ENCODE measurements at regions of chr1 and their contacts with region 1.

Region 1: DNA sequence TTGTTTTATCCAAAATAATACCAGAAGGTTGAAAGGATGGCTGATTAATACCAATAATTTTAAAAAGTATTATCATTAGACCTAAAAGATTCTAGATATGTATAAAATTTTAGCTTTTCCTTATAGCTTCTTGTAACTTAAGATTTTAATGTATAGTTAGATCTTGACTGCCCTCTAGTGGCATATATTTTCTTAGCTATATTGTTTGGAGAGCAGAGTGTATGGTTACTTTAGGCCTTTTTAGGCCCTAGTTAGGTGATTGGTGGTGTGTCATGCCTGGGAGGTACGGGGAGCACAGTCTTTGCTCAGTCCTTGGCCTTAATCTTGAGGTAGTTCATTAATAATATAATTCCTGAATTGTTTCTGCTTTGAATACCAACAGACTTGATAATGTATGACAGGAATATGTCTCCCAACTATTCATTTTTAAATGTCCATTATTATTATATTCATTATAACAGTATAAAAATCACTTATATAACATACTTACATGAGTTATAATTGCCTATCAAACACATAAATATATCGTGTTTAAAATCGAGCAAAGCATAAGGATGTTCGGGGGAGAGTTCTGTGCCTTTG is 328.4 kb downstream of the ZP4 start:
- DNase-seq: peak; percentile 31 to 75
- ATAC-seq: peak; percentile 91 to 94
- H3K4me3 ChIP-seq: no peak overlapping the region
- H3K27ac ChIP-seq: no peak overlapping the region
- H3K4me1 ChIP-seq: no peaks in the 10 kb centered on the region
- CTCF ChIP-seq: peak; percentile 70
- EP300 ChIP-seq: no peak
- POLR2A ChIP-seq: no peak
- RAD21 ChIP-seq: peak; percentile 68 to 69

Region 2: DNA sequence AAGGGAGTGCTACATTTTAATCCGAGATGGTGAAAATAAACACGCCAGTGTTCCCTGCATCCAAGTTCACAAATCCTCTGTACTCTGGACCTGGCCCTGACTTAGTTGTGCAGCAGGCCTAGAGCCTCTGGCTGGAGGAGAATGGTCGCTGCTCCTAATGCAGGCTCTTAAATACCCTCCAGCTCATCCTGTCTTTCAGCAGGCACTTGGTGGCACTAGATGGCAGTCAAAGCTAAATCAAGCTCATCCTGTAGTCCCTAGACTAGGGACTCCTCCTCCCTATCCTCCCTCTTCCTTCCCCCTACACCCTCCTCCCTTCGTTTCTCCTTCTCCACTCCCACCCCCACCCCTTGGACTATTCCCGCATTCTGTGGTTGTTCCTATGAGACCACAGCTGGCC is 808.8 kb before region 1 on chr1:
- CTCF ChIA-PET with region 1: interaction called, 14 read pairs
- POLR2A ChIA-PET with region 1: no interaction called
- DNase-seq: peak; percentile 21 to 73
- ATAC-seq: peak; percentile 94 to 97
- H3K4me3 ChIP-seq: no peak overlapping the region
- H3K27ac ChIP-seq: no peak overlapping the region
- H3K4me1 ChIP-seq: no peaks in the 10 kb centered on the region
- CTCF ChIP-seq: peak; percentile 56
- EP300 ChIP-seq: no peak
- POLR2A ChIP-seq: no peak
- RAD21 ChIP-seq: peak; percentile 63 to 78

Region 3: DNA sequence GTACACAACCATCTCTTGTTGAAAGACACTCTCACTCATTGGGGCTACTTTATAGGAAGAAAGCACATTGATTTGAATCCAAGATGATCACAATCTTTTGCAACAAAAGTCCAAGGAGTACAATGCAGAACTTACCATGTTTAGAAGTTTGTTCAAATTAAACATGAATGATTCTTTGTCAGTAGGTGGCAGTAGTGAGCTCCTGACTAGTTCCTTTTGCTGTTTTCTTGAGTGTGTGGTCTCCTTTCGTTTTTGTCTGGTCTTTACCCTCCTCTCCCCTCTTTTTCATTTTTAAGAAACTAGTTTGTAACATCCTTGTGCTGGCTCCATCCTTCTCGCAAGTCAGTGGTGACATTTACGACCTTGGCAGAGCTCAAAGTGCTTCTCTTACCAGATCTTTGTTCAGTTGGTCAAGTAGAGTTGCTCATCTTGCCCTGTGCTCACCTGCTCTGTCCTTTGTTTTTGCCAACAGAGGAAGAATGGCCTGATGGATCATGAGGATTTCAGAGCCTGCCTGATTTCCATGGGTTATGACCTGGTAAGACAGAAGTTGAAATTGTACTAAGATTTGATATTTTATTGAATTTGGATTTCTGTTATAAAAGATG is 803.0 kb before region 1 on chr1:
- CTCF ChIA-PET with region 1: interaction called, 14 read pairs
- POLR2A ChIA-PET with region 1: no interaction called
- DNase-seq: peak; percentile 26 to 51
- ATAC-seq: peak in 1 of 2 experiments; percentile 73; a peak in 3 of 6 replicates
- H3K4me3 ChIP-seq: no peak overlapping the region
- H3K27ac ChIP-seq: no peak overlapping the region
- H3K4me1 ChIP-seq: no peaks in the 10 kb centered on the region
- CTCF ChIP-seq: peak; percentile 75
- EP300 ChIP-seq: no peak
- POLR2A ChIP-seq: no peak
- RAD21 ChIP-seq: peak; percentile 40 to 53; a peak in 4 of 5 replicates